ENCODE measurements at regions of chr17 and their contacts with region 1.

Region 1: GRCh38 chr17:42577532-42578281 is at the start of gene PSMC3IP:
- DNase-seq: peak; percentile 98
- CTCF ChIP-seq: peak; percentile 36

Region 2: GRCh38 chr17:42389135-42389417 is 188.6 kb before region 1 on chr17:
- CTCF ChIA-PET with region 1: no interaction called
- POLR2A ChIA-PET with region 1: no interaction called
- DNase-seq: no peak
- CTCF ChIP-seq: no peak

Region 3: DNA sequence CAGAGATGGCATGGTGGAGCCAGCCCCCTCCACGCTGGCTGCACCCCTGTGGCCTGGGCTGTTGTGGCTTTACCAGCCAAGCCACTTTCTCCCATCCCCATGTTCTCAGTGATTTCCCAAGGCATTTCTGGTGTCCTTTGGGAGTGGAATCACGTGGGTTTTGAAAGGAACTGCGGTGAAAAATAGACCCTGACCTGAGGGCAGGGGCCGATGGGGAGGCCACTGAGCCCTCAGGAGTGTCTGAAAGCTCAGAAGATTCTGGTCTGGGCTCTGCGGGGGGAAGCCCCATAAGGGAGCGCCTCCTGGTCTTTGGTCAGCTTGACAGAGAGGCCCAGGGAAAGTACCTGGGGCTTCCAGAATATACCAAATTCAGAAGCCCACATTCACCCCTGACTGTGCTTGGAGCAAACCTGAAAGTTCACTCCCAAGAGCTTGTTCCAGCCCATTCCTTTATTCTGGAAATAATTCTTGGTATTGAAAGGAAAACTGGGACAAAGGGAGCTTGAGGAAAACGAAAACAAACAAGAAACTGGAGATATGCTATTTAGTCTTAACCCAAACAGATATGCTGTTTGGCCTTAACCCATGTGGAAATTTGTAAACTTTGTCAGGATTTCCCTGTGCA is 65.0 kb before region 1 on chr17:
- CTCF ChIA-PET with region 1: no interaction called
- POLR2A ChIA-PET with region 1: no interaction called
- DNase-seq: peak; percentile 82
- CTCF ChIP-seq: no peak

Region 4: DNA sequence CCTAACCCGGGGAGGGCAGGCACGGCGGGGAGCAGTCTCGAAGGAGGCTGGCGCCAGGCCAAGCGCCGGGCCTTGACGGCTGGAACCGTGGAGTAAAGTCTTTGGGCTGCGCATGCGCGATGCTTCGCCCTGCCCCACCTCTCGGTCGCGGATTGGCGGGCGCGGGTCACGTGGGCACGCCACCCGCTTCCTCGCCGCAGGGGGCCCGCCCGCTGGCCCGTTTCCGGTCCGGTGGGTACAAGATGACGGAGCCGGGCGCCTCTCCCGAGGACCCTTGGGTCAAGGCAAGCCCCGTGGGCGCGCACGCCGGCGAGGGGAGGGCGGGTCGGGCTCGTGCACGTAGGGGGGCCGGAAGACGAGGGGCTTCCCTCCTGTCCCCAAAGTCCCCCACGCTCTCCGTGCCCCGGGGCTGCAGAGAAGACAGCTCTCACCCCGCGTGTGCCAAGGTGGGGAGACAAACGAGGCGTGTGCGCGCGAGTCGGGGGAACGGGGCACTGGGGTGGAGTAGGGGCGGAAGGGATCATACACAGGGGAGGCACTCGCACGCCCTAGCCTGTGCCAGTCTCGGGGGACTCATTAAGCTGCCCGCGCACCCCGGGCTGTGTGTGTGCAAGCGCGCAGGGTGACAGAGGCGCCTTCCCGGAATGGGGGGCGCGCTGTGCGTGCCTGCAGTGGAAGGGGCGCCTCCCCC is 10.7 kb before region 1 on chr17 and contains the start of gene MLX:
- CTCF ChIA-PET with region 1: interaction called, 49 read pairs
- POLR2A ChIA-PET with region 1: interaction called, 5 read pairs
- DNase-seq: peak; percentile 100
- CTCF ChIP-seq: no peak

Region 5: GRCh38 chr17:42618442-42619150 is 40.9 kb after region 1 on chr17:
- CTCF ChIA-PET with region 1: interaction called, 25 read pairs
- POLR2A ChIA-PET with region 1: no interaction called
- DNase-seq: peak; percentile 79
- CTCF ChIP-seq: peak; percentile 64

Region 6: DNA sequence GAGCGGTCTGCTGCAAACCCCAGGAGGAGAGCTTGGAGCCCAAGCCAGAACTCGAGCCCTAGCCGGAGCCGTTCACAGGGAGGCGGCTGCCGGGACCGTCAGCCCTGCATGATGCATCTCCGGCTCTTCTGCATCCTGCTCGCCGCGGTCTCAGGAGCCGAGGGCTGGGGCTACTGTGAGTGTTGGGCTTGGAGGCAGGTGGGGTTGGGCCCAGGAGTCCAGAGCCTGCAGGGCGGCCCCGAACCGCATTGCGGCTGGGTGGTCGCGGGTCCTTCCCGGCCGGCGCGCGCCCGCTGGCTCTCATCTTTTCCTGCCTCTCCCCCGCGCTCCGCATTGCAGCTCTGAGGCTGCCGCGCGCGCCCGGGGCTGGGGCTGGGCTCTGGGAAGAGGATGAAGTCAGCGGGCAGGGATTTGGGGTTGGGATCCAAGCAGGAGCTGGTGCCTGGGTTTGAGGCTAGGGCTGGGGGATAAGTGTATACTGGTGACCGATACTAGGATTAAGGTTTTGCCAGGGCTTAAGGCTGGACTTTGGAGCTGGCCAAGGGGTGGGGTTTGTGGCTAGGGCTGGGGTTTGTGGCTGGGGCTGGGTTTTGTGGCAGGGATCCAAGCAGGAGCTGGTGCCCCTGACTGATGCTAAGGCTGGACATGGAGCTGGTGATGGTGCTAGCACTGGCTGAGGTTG is 105.2 kb after region 1 on chr17:
- CTCF ChIA-PET with region 1: interaction called, 97 read pairs
- POLR2A ChIA-PET with region 1: interaction called, 5 read pairs
- DNase-seq: peak; percentile 48
- CTCF ChIP-seq: no peak

Region 7: DNA sequence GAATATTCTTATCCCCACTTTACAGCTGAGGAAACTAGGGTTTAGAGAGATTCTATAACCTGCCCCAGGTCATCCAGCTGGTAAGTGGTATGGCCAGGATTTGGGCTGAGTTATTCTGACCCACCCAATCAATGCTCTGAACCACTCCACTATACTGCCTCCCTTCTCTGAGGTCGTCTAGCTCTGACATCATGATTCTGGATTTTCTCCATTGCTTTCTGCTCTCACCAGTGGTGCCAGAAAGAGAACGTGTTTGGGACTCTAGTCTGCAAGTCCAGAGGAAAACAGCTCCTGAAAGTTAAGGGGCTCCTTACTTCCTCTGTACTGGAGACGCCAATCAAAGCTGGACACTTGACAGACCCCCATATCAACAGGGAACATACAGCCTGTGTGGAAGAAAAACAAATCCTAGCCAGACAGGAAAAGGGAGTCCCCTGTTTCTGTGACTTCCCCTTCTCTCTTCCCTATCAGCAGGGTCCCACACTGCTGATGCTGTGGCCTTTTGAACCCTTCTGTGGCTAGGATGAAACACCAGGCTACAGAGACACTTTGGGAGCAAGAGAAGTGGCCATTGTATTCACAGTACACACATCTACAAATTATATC is 173.1 kb after region 1 on chr17:
- CTCF ChIA-PET with region 1: interaction called, 17 read pairs
- POLR2A ChIA-PET with region 1: no interaction called
- DNase-seq: no peak
- CTCF ChIP-seq: no peak

Region 8: GRCh38 chr17:42819944-42820535 is 242.3 kb after region 1 on chr17:
- CTCF ChIA-PET with region 1: interaction called, 15 read pairs
- POLR2A ChIA-PET with region 1: no interaction called
- DNase-seq: peak; percentile 62
- CTCF ChIP-seq: peak; percentile 72